T-cell (primary cell): ENCODE measurements at regions of chr3 and their contacts with region 1.

Region 1: GRCh38 chr3:128969993-128970739 is 23.7 kb downstream of the CFAP92 start:
- DNase-seq: peak; percentile 21 to 82 (median 57)
- ATAC-seq: peak; percentile 62 to 69 (median 63)
- H3K4me3 ChIP-seq: no peak overlapping the region
- H3K4me3 Mint-ChIP-seq: no peak overlapping the region
- H3K27ac ChIP-seq: no peak overlapping the region
- H3K27ac Mint-ChIP-seq: no peak overlapping the region
- H3K4me1 ChIP-seq: no peaks in the 10 kb centered on the region
- H3K4me1 Mint-ChIP-seq: peaks cover 3 to 9% (median 7%) of the 10 kb centered on the region in 3 donors
- H3K27me3 ChIP-seq: peaks cover 0 to 9% of the 10 kb centered on the region in 2 experiments
- H3K27me3 Mint-ChIP-seq: no peaks in the 10 kb centered on the region

Region 2: GRCh38 chr3:128242818-128243601 is 727.2 kb before region 1 on chr3:
- CTCF ChIA-PET with region 1: no interaction called
- POLR2A ChIA-PET with region 1: no interaction called
- DNase-seq: peak in 3 of 35 experiments; percentile 3 to 30 (median 5)
- ATAC-seq: peak in 3 of 4 experiments; percentile 44 to 68 (median 49)
- H3K4me3 ChIP-seq: no peak overlapping the region
- H3K4me3 Mint-ChIP-seq: peak overlapping the region; percentile 18 to 74 (median 46)
- H3K27ac ChIP-seq: no peak overlapping the region
- H3K27ac Mint-ChIP-seq: peak overlapping the region; percentile 57 to 81
- H3K4me1 ChIP-seq: peaks cover 4 to 20% of the 10 kb centered on the region in 2 experiments
- H3K4me1 Mint-ChIP-seq: peaks cover 34 to 43% (median 36%) of the 10 kb centered on the region in 3 donors
- H3K27me3 ChIP-seq: no peaks in the 10 kb centered on the region
- H3K27me3 Mint-ChIP-seq: no peaks in the 10 kb centered on the region

Region 3: GRCh38 chr3:128993461-128994173 is 23.5 kb after region 1 on chr3 and contains the start of gene CFAP92:
- CTCF ChIA-PET with region 1: interaction called, 7 to 11 read pairs
- POLR2A ChIA-PET with region 1: no interaction called
- DNase-seq: peak; percentile 80 to 93 (median 89)
- ATAC-seq: peak; percentile 97 to 99 (median 98)
- H3K4me3 ChIP-seq: peak within 1 kb of the TSS; percentile 32 to 35
- H3K4me3 Mint-ChIP-seq: peak within 1 kb of the TSS; percentile 68 to 78 (median 75)
- H3K27ac ChIP-seq: no peak within 1 kb of the TSS
- H3K27ac Mint-ChIP-seq: peak within 1 kb of the TSS in 1 of 2 donors; percentile 75
- H3K4me1 ChIP-seq: peaks cover 28% of the 10 kb centered on the region in 2 experiments
- H3K4me1 Mint-ChIP-seq: peaks cover 25 to 35% (median 33%) of the 10 kb centered on the region in 3 donors
- H3K27me3 ChIP-seq: peaks cover 0 to 13% of the 10 kb centered on the region in 2 experiments
- H3K27me3 Mint-ChIP-seq: no peaks in the 10 kb centered on the region
- total RNA-seq, gene CFAP92: 0.13 to 0.49 (median 0.26) TPM

Region 4: DNA sequence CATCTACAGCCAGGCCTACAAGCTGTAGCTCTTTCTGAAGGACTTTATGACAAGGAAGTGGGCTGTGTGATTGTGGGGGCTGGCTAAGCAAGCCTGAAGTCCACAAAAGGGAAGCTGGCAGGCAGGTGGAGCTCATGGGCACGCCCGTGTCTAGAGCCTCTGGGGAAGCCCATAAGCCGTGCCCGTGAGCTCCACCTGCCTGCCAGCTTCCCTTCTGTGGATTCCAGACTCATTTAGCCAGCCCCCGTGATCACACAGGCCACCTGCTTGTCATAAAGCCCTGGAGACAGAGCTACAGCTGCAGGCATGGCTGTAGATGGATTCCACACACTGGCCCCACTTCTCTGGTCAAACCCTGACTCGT is 46.2 kb after region 1 on chr3:
- CTCF ChIA-PET with region 1: interaction called, 33 to 58 read pairs
- POLR2A ChIA-PET with region 1: interaction called in 1 of 2 experiments, 8 read pairs
- DNase-seq: peak; percentile 42 to 85 (median 62)
- ATAC-seq: peak; percentile 80 to 91 (median 84)
- H3K4me3 ChIP-seq: peak overlapping the region in 1 of 2 donors; percentile 32
- H3K4me3 Mint-ChIP-seq: peak overlapping the region; percentile 50 to 81 (median 72)
- H3K27ac ChIP-seq: peak overlapping the region; percentile 84
- H3K27ac Mint-ChIP-seq: peak overlapping the region; percentile 95 to 99
- H3K4me1 ChIP-seq: peaks cover 26 to 43% of the 10 kb centered on the region in 2 experiments
- H3K4me1 Mint-ChIP-seq: peaks cover 46 to 61% (median 47%) of the 10 kb centered on the region in 3 donors
- H3K27me3 ChIP-seq: no peaks in the 10 kb centered on the region
- H3K27me3 Mint-ChIP-seq: no peaks in the 10 kb centered on the region

Region 5: GRCh38 chr3:129120254-129121004 is 150.3 kb after region 1 on chr3:
- CTCF ChIA-PET with region 1: interaction called in 1 of 2 experiments, 11 read pairs
- POLR2A ChIA-PET with region 1: no interaction called
- DNase-seq: peak; percentile 79 to 95 (median 91)
- ATAC-seq: peak; percentile 59 to 68 (median 64)
- H3K4me3 ChIP-seq: peak overlapping the region; percentile 97 to 98
- H3K4me3 Mint-ChIP-seq: peak overlapping the region; percentile 83 to 93 (median 90)
- H3K27ac ChIP-seq: peak overlapping the region; percentile 75
- H3K27ac Mint-ChIP-seq: peak overlapping the region; percentile 98 to 99
- H3K4me1 ChIP-seq: peaks cover 31 to 71% of the 10 kb centered on the region in 2 experiments
- H3K4me1 Mint-ChIP-seq: peaks cover 40 to 60% (median 58%) of the 10 kb centered on the region in 3 donors
- H3K27me3 ChIP-seq: no peaks in the 10 kb centered on the region
- H3K27me3 Mint-ChIP-seq: no peaks in the 10 kb centered on the region

Region 6: DNA sequence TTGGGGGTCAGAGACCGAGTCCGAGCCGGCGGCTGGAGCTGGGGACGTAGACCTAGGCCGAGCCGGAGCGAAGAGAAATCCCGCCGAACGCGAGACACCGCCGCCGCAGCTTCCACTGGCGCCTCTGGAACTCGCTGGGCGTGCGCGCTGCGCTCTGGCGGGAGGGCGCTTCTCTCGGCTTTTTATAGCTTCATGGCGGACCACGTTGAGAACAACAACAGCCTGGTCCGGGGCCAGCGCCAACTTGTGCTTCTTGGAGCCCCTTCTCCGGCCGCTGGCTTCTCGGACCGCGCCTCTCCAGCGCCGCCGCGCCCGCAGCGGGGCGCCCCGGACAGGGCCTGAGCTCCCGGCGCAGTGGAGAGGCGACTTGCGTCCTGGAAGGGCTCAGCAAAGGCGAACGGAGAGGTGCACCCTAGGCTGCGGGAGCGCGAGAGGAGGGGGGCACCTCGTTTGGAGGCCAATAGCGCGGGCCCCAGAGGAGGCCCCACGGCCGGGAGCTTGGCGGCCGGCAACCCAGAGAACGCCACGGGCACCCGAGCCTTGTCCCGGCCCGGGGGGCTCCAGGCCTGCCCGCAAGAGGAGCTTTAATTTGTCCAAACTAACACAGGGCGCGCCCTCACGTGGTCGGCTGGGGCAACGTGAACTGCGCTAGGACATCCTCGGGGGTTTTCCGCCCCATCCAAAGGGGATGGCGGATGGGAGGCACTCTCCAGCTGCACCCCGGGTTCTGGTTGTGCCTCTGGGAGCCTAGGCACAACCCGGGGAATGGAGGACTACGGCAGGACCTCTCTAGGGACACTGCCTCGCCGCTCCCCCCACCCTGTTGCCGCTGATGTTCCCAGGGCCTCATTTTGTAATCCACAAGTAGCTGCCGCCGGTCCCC is 346.2 kb after region 1 on chr3:
- CTCF ChIA-PET with region 1: interaction called, 3 to 12 read pairs
- POLR2A ChIA-PET with region 1: interaction called in 1 of 2 experiments, 4 read pairs
- DNase-seq: peak; percentile 67 to 92 (median 84)
- ATAC-seq: peak; percentile 58 to 64 (median 62)
- H3K4me3 ChIP-seq: peak overlapping the region; percentile 71 to 96
- H3K4me3 Mint-ChIP-seq: peak overlapping the region; percentile 83 to 93 (median 89)
- H3K27ac ChIP-seq: no peak overlapping the region
- H3K27ac Mint-ChIP-seq: peak overlapping the region; percentile 79 to 84
- H3K4me1 ChIP-seq: peaks cover 10 to 36% of the 10 kb centered on the region in 2 experiments
- H3K4me1 Mint-ChIP-seq: peaks cover 22 to 28% (median 23%) of the 10 kb centered on the region in 3 donors
- H3K27me3 ChIP-seq: no peaks in the 10 kb centered on the region
- H3K27me3 Mint-ChIP-seq: no peaks in the 10 kb centered on the region